Panc1 (cell line): ENCODE measurements at regions of chr9 and their contacts with region 1.

Region 1: GRCh38 chr9:97866848-97867247 is 13.8 kb downstream of the FOXE1 start:
- DNase-seq: no peak
- ATAC-seq: no peak
- H3K4me3 ChIP-seq: no peak overlapping the region
- H3K27ac ChIP-seq: no peak overlapping the region
- H3K4me1 ChIP-seq: no peaks in the 10 kb centered on the region
- H3K27me3 ChIP-seq: no peaks in the 10 kb centered on the region
- CTCF ChIP-seq: no peak

Region 2: GRCh38 chr9:97801180-97801579 is 65.7 kb before region 1 on chr9:
- CTCF ChIA-PET with region 1: no interaction called
- POLR2A ChIA-PET with region 1: interaction called, 11 read pairs
- in situ Hi-C with region 1: no loop called
- intact Hi-C with region 1: no loop called
- DNase-seq: no peak
- ATAC-seq: no peak
- H3K4me3 ChIP-seq: no peak overlapping the region
- H3K27ac ChIP-seq: no peak overlapping the region
- H3K4me1 ChIP-seq: peaks cover 3% of the 10 kb centered on the region; the same call in 1 of the 2 replicates
- H3K27me3 ChIP-seq: no peaks in the 10 kb centered on the region
- CTCF ChIP-seq: no peak

Region 3: GRCh38 chr9:97811527-97812246 is 55.2 kb before region 1 on chr9:
- CTCF ChIA-PET with region 1: no interaction called
- POLR2A ChIA-PET with region 1: no interaction called
- in situ Hi-C with region 1: no loop called
- intact Hi-C with region 1: no loop called
- DNase-seq: no peak
- ATAC-seq: no peak
- H3K4me3 ChIP-seq: no peak overlapping the region
- H3K27ac ChIP-seq: no peak overlapping the region
- H3K4me1 ChIP-seq: no peaks in the 10 kb centered on the region
- H3K27me3 ChIP-seq: no peaks in the 10 kb centered on the region
- CTCF ChIP-seq: no peak